Common myeloid progenitor, CD34-positive (primary cell): ENCODE measurements at regions of chr19 and their contacts with region 1.

Region 1: GRCh38 chr19:4352701-4353121 is 9.3 kb downstream of the MPND start:
- DNase-seq: peak; percentile 78 to 89 (median 80)
- H3K4me3 ChIP-seq: no peak overlapping the region
- H3K27ac ChIP-seq: no peak overlapping the region
- H3K4me1 ChIP-seq: peaks cover 0 to 2% (median under 1%) of the 10 kb centered on the region in 4 experiments
- H3K27me3 ChIP-seq: no peaks in the 10 kb centered on the region

Region 2: DNA sequence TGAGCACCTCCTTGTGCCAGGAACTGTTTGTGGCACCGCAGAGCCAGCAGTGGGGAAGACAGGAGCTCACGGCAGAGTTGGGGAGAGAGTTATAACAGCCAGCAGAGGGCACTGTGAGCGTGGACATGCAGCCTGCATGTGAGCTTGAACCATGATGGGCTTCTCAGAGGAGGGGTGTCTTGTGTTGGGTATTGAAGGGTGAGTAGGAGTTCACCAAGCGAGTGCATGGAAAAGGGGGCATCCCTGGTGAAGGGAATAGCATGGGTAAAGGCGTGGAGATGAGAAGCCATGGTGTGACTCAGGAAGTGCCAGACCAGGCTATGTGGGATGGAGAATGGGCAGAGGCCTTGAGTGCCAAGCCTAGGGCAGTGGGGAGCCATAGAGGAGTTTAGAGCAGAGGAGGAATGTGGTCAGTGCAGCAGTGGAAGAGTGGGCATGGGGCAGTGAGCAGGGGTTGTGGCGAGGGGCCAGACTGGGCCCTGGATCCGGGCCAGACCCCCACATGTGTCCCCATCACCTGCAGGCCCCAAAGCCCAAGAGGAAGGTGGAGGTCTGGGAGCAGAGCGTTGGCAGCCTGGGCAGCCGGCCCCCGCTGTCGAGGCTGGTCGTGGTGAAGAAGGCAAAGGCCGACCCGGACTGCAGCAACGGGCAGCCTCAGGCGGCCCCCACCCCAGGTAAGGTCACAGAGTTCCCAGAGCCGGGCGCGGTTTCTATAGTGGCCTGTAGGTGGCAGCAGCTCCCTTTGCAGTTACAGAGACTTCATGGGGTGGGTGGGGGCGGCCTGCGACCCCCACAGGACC is 85.4 kb before region 1 on chr19:
- CTCF ChIA-PET with region 1: interaction called, 62 read pairs
- POLR2A ChIA-PET with region 1: interaction called, 7 read pairs
- DNase-seq: peak; percentile 43 to 76 (median 71)
- H3K4me3 ChIP-seq: no peak overlapping the region
- H3K27ac ChIP-seq: no peak overlapping the region
- H3K4me1 ChIP-seq: peaks cover 0 to 18% (median 14%) of the 10 kb centered on the region in 4 experiments
- H3K27me3 ChIP-seq: no peaks in the 10 kb centered on the region

Region 3: GRCh38 chr19:4272894-4273293 is 79.8 kb before region 1 on chr19:
- CTCF ChIA-PET with region 1: interaction called, 62 read pairs
- POLR2A ChIA-PET with region 1: interaction called, 7 read pairs
- DNase-seq: no peak
- H3K4me3 ChIP-seq: no peak overlapping the region
- H3K27ac ChIP-seq: no peak overlapping the region
- H3K4me1 ChIP-seq: peaks cover 0 to 17% (median 9%) of the 10 kb centered on the region in 4 experiments
- H3K27me3 ChIP-seq: no peaks in the 10 kb centered on the region

Region 4: DNA sequence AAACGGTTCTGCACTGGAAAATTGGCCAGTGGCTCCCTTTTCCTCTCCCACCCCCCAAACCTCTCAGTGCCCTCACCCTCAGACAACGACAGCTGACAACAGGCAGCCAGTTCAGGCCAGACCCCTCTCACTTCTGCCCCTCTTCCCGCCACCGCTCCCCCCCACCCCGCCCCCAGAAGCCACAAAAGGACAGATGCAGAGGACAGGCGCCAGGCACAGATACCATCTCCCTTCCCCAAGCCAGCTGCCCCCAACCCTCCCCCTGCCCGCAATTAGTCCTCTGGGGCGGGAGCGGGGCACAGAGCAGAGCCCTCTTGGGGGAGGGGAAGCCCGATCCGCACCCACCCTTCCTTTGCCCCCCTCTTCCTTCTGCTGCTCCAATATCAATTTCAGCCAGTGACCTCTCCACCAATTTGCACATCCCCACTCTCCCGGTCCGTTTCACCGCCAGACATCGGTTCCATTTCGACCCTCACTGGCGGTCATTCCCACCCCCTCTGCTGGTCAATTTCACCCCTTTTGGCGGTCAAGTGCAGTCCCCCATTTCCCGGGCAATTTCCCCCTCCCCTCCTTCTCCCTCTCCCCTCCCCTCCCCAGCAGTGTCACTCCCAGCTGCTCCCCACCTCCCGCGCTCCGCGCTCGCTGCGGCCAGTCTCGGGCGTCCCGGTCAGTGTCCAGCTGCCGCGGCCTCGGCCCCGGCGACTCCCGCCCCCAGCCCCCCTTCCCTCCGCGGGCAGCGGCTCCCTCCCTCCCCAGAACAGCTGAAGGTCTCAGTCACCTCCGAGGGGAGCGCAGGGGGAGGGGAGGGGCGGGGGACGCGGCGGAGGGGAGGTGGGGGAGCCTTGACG is 74.1 kb before region 1 on chr19 and contains the start of gene SHD:
- CTCF ChIA-PET with region 1: interaction called, 12 read pairs
- POLR2A ChIA-PET with region 1: no interaction called
- DNase-seq: peak in 2 of 3 donors; percentile 53 to 66
- H3K4me3 ChIP-seq: peak within 1 kb of the TSS; percentile 13 to 72 (median 48)
- H3K27ac ChIP-seq: no peak within 1 kb of the TSS
- H3K4me1 ChIP-seq: peaks cover 0 to 27% (median 23%) of the 10 kb centered on the region in 4 experiments
- H3K27me3 ChIP-seq: peaks cover 0 to 33% (median 6%) of the 10 kb centered on the region in 5 experiments

Region 5: GRCh38 chr19:4322942-4323665 is 29.6 kb before region 1 on chr19:
- CTCF ChIA-PET with region 1: interaction called, 13 read pairs
- POLR2A ChIA-PET with region 1: no interaction called
- DNase-seq: no peak
- H3K4me3 ChIP-seq: no peak overlapping the region
- H3K27ac ChIP-seq: no peak overlapping the region
- H3K4me1 ChIP-seq: peaks cover 0 to 22% (median 18%) of the 10 kb centered on the region in 4 experiments
- H3K27me3 ChIP-seq: peaks cover 0 to 20% (median 7%) of the 10 kb centered on the region in 5 experiments

Region 6: GRCh38 chr19:4362861-4363510 is 10.3 kb after region 1 on chr19:
- CTCF ChIA-PET with region 1: interaction called, 11 read pairs
- POLR2A ChIA-PET with region 1: no interaction called
- DNase-seq: no peak
- H3K4me3 ChIP-seq: no peak overlapping the region
- H3K27ac ChIP-seq: no peak overlapping the region
- H3K4me1 ChIP-seq: peaks cover 0 to 2% (median 0%) of the 10 kb centered on the region in 4 experiments
- H3K27me3 ChIP-seq: no peaks in the 10 kb centered on the region